Lower leg skin (tissue), 4 donors: ENCODE measurements at regions of chr11 and their contacts with region 1.

Region 1: DNA sequence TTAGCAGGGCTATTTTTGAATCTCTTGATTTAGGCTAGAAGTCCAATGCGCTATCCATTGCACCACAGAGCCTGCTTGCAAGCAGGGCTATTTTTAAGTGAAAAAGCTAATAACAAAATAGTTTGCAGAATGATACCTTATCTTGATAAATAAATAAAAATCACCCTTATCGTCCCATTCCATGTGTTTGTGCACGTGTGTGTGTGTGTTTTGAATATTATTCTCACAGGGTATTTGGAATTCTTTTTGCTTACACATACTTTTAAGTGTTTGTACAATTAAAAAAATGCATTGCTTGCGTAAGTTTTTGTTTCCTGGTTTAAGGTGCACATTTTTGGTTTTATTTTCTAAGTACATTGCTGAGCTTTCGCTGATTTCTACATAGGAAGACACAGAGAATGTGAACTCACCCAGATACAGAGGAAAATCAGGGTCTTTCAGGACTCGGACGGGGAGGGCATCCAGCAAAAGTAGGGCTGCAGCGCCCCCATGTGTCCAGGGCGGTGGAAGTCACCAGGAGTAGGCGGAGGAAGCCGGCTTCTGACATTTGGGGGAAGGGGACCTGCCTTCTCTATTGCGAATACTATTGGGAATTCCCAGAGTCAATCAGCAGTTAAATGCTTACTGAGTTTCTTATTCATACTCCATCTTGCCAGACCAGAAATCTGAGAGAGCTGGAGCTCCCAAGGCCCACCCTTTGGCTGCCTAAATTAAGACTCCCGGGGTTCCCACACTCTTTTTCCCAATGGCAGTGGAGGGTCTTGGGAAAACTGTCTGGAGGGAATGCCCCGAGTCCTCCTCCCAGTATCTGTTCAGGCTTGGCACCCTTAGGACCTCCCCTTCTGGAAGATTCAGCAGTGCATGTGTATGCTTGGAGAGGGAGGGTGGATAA is 27.2 kb downstream of the SLC1A2 start:
- DNase-seq: peak; percentile 63 to 96
- H3K4me3 ChIP-seq: no peak overlapping the region
- CTCF ChIP-seq: peak in 1 of 3 donors; percentile 77
- POLR2A ChIP-seq: no peak

Region 2: GRCh38 chr11:34696862-34697261 is 695.3 kb before region 1 on chr11:
- intact Hi-C with region 1: no loop called
- DNase-seq: no peak
- H3K4me3 ChIP-seq: no peak overlapping the region
- CTCF ChIP-seq: no peak
- POLR2A ChIP-seq: no peak

Region 3: DNA sequence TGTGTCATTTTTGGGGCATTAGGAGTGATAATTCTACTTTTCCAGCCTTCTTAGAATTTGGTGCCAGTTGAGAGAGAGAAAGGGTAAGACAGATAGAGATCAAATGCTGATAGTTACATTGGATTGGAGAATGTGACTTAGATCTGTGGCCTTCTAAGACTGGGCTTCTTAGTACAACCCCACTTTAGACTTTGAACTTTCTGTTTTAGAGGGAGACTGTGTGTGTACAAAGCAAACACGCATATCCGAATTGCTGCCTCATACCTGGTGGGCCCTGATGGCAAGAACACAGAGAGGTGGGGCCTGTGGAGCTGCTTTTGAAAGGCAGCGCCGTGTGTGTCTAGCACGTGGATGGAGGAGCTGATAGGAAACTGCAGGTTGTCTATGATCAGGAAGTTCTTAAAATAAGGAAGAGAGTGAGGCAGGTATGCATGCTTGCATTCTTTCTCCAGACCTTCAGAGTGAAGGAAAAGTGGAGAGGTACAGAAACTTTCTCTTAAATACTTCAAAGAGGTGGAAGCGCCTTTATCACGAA is 462.3 kb before region 1 on chr11:
- intact Hi-C with region 1: loop called (anchors 10 kb)
- DNase-seq: no peak
- H3K4me3 ChIP-seq: no peak overlapping the region
- CTCF ChIP-seq: no peak
- POLR2A ChIP-seq: no peak

Region 4: DNA sequence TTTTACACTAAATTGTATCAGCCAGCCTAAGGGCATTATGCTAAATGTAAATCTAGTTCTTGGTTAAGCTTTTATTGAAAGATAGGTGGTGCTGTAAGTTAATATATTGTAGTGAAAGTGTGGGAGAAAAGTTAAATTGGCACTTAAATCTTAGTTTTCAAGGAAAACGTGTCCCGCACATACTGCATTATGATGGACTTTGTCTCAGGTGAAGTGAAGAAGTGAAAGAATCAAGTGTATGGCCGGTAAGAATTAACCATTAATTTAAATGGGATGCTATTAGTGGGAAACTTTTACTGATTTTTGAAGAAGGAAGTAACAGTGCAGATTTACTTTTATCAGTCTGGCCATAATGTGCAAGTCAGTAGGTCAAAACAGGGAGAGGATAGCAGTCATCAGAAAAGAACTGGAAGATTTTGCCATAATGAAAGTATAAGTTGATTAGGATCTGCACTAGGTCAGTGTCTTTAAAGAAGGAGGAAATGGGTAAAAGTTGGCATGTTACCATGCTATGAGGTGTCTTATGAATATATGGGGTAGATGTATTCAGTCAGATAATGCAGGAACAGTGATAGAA is 394.1 kb before region 1 on chr11:
- intact Hi-C with region 1: loop called (anchors 5 kb)
- DNase-seq: no peak
- H3K4me3 ChIP-seq: no peak overlapping the region
- CTCF ChIP-seq: peak in 1 of 3 donors; percentile 62
- POLR2A ChIP-seq: no peak

Region 5: GRCh38 chr11:37108436-37109285 is 1716.5 kb after region 1 on chr11:
- intact Hi-C with region 1: no loop called
- DNase-seq: no peak
- H3K4me3 ChIP-seq: no peak overlapping the region
- CTCF ChIP-seq: no peak
- POLR2A ChIP-seq: no peak